ENCODE measurements at regions of chr9 and their contacts with region 1.

Region 1: DNA sequence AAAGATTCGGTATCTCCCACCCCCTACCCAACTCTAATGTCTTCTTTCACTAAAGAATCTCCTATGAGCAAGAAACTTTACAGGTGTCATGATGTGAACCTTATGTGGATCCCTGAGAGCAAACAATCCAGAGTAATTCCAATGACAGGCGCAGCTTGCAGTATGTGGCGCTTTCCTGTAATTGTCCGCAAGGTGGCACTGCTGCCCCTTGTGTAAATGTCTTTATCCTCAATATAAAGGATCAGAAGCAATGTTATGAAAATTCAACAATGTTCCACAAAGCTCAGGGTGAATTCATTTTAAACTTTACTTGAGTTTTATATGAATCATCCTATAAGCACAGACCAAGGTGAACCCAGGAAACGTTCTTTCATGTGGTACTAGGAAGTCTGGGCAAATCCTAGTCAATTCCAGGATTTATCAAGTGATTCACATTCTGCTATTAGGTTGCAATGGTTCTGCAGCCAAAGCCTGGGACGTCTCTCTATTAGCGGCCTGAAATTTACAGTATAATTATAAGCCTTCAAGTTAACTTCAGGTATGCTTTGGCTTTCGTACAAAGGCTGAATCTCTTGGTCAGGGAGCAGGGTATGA is 113.7 kb downstream of the TRPM6 start:
- DNase-seq: peak; percentile 74
- H3K4me3 ChIP-seq: no peak overlapping the region
- H3K27ac ChIP-seq: no peak overlapping the region
- H3K4me1 ChIP-seq: no peaks in the 10 kb centered on the region
- H3K27me3 ChIP-seq: no peaks in the 10 kb centered on the region
- CTCF ChIP-seq: peak; percentile 52 to 83 (median 78)
- POLR2A ChIP-seq: no peak

Region 2: GRCh38 chr9:74666625-74667316 is 107.2 kb before region 1 on chr9:
- intact Hi-C with region 1: no loop called
- DNase-seq: no peak
- H3K4me3 ChIP-seq: no peak overlapping the region
- H3K27ac ChIP-seq: no peak overlapping the region
- H3K4me1 ChIP-seq: no peaks in the 10 kb centered on the region
- H3K27me3 ChIP-seq: no peaks in the 10 kb centered on the region
- CTCF ChIP-seq: no peak
- POLR2A ChIP-seq: no peak

Region 3: GRCh38 chr9:75001719-75002422 is 227.9 kb after region 1 on chr9:
- intact Hi-C with region 1: loop called (anchors 2 kb)
- DNase-seq: peak; percentile 45
- H3K4me3 ChIP-seq: no peak overlapping the region
- H3K27ac ChIP-seq: no peak overlapping the region
- H3K4me1 ChIP-seq: no peaks in the 10 kb centered on the region
- H3K27me3 ChIP-seq: no peaks in the 10 kb centered on the region
- CTCF ChIP-seq: peak; percentile 60 to 93 (median 86)
- POLR2A ChIP-seq: no peak

Region 4: GRCh38 chr9:75071530-75072124 is 297.6 kb after region 1 on chr9:
- intact Hi-C with region 1: loop called (anchors 5 kb)
- DNase-seq: no peak
- H3K4me3 ChIP-seq: no peak overlapping the region
- H3K27ac ChIP-seq: no peak overlapping the region
- H3K4me1 ChIP-seq: no peaks in the 10 kb centered on the region
- H3K27me3 ChIP-seq: no peaks in the 10 kb centered on the region
- CTCF ChIP-seq: no peak
- POLR2A ChIP-seq: no peak

Measured in prostate gland (tissue), 2 donors.